Posterior cingulate gyrus (tissue), 11 donors: ENCODE measurements at regions of chr11 and their contacts with region 1.

Region 1: DNA sequence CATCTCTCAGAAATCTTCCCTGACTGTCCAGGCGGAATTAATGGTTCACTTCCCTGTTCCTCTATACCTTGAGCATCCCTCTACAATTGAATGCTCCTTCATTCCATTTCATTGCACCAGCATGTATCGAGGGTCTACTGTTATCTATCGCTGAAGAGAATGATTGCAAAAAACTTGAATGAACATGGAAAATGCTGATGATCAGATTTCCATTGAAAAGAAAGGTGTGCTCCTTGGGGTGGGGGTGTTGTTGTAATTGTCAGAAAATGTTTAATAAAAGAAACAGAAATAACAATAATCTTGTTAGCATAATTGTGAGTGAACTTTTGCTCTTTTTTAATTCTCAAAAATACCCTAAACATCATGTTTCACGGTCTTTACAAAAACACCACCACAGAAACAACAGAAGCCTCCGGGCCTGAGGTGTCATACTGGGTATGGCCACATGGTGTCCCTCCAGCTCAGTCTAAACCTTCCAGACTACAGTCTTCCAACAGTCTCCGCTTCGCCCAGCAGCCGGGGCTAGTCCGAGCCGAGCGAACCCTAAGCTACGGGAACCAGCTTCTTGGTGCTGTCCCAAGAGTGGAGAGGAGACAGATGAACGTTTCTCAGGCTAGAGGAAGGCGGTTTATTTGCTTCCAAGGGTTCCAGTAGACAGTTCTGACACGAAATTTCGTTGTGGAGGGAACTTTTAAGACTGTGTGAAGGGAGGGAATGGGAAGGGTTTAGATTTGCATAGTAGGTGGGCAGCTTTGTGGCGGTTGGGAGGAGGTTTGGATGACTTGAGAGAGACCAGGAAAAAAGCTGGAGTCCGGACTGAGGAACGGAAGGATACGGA is 75.8 kb upstream of the ZBED5 start:
- DNase-seq: peak; percentile 86 to 98 (median 92)

Region 2: DNA sequence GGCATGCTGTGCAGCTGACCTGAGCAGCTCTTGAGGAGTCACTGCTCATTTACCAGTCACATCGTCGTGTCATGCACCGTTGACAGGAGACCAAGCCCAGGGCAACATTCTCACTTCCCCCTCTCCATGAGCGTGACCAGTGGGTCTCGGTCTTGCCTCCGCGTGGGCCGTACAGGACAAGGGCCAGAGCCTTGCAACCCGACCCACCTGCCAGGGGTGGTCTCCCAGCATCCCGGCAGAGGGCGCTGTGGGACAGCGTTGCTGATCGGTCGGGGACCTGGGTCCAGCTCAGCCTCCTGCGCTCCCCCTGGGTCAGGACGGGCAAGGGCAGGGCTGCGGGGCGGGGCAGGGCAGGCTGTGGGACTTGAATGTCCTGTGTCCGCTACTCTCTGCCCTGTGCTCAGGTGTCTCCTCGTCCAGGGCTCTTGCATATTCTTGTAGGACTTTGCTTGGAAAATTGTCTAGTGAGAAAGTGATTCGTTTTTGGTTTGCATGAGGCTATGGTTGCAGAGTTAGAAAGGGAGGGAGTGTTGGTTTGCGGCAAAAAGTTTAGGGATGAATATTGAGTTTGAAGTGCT is 141.2 kb before region 1 on chr11:
- intact Hi-C with region 1: loop called (anchors 5 kb)
- DNase-seq: peak; percentile 52 to 96 (median 83)

Region 3: GRCh38 chr11:10808553-10809372 is 124.9 kb before region 1 on chr11 and contains the start of gene EIF4G2:
- intact Hi-C with region 1: loop called (anchors 5 kb)
- DNase-seq: peak; percentile 98 to 100 (median 100)

Region 4: GRCh38 chr11:10857709-10858438 is 75.8 kb before region 1 on chr11 and contains the start of gene ZBED5:
- intact Hi-C with region 1: loop called (anchors 5 kb)
- DNase-seq: peak; percentile 97 to 100 (median 98)

Region 5: DNA sequence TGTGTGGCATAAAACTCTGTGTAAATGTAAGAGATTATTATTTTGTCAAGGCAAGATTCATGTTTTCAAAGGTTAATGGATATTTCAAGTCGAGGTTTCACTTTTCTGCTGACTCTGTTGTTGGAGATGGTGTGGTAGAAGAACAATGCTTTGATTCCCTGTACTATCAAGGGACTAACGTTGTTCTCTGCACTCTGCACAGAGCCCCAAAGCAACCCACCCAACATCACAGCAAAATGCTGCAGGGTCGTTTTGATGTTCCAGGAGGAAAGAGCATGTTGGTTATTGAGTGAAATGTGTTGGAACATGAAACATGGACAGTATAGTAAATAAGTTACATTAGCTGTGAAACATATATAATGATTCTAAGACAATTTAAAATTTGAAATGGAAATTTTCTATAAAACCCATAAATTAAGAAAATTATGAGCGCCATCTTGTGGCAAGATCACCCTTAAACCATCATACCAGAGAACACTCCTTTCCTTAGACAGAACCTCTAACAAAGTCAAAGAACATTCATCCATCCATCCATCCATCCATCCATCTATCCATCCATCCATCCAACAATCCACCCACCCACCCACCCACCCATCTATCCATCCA is 88.6 kb after region 1 on chr11:
- intact Hi-C with region 1: loop called (anchors 1 kb)
- DNase-seq: no peak

Region 6: DNA sequence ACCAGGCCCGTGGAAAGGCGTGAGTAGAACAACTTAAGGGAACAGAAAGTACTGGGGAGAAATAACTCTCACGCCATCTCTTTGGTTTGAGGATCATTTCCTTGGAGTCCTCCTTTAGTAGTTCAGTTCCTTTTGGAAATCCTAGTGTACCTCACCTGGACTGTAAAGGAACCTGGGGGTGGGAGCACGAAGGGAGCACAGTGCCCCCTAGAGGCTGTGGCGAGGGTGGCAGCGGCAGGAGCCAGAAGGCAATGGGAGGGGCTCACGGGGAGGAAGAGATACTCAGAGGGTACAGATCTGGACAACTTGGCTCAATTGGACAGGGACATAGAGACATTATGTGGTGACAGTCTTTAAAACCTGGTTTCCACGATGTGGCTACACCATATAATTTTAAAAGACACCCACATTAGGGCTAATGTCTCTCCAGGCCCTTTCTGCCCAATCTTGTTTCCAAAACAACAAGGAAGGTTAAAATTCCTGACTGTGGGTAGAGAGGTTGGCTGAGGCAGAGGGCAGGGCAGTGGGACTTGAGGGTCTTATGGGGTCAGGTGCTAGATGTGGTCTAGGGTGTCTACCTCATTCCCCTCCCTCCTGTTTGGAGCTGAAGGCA is 332.4 kb after region 1 on chr11:
- intact Hi-C with region 1: loop called (anchors 10 kb)
- DNase-seq: peak in 6 of 10 donors; percentile 31 to 78 (median 54)

Region 7: GRCh38 chr11:11787305-11788062 is 853.8 kb after region 1 on chr11:
- intact Hi-C with region 1: loop called (anchors 1 kb)
- DNase-seq: peak; percentile 54 to 95 (median 84)